Testis (tissue), 5 donors: ENCODE measurements at regions of chr17 and their contacts with region 1.

Region 1: GRCh38 chr17:18319604-18320256 is 4.6 kb downstream of the SMCR8 start:
- DNase-seq: peak; percentile 76
- H3K4me3 ChIP-seq: no peak overlapping the region
- H3K27ac ChIP-seq: no peak overlapping the region
- H3K4me1 ChIP-seq: peaks cover 54% of the 10 kb centered on the region
- H3K27me3 ChIP-seq: no peaks in the 10 kb centered on the region
- CTCF ChIP-seq: peak in 2 of 3 experiments; percentile 42
- POLR2A ChIP-seq: no peak

Region 2: GRCh38 chr17:18260332-18261144 is 59.2 kb before region 1 on chr17 and contains the start of gene MIEF2:
- intact Hi-C with region 1: loop called (anchors 10 kb)
- DNase-seq: peak; percentile 98
- H3K4me3 ChIP-seq: peak within 1 kb of the TSS; percentile 80 to 83
- H3K27ac ChIP-seq: peak within 1 kb of the TSS; percentile 77 to 89
- H3K4me1 ChIP-seq: peaks cover 33% of the 10 kb centered on the region
- H3K27me3 ChIP-seq: no peaks in the 10 kb centered on the region
- CTCF ChIP-seq: peak in 1 of 3 experiments; percentile 39
- POLR2A ChIP-seq: no peak
- total RNA-seq, gene MIEF2: 28.5 to 29.4 TPM